ENCODE measurements at regions of chr17 and their contacts with region 1.

Region 1: GRCh38 chr17:29687596-29687995 is 64.9 kb upstream of the CORO6 start:
- DNase-seq: no peak
- H3K4me3 ChIP-seq: no peak overlapping the region
- H3K27ac ChIP-seq: no peak overlapping the region
- H3K4me1 ChIP-seq: peaks cover 9% of the 10 kb centered on the region
- H3K27me3 ChIP-seq: no peaks in the 10 kb centered on the region
- CTCF ChIP-seq: no peak

Region 2: DNA sequence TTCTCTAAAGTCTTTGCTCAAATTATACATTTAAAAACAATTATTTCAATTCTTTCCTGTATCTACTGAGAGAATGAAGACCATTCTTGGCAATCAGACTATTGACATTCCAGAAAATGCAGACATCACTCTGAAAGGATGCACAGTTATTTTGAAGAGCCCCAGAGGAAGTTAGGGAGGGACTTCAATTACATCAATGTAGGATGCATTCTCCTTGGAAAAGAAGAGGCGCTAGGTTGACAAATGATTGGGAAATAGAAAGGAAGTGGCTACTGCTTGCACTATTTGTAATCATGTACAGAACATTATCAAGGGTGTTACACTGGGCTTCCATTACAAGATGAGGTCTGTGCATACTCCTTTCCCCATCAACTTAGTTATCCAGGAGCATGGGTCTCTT is 168.1 kb after region 1 on chr17:
- CTCF ChIA-PET with region 1: no interaction called
- POLR2A ChIA-PET with region 1: no interaction called
- intact Hi-C with region 1: no loop called
- DNase-seq: no peak
- H3K4me3 ChIP-seq: no peak overlapping the region
- H3K27ac ChIP-seq: no peak overlapping the region
- H3K4me1 ChIP-seq: no peaks in the 10 kb centered on the region
- H3K27me3 ChIP-seq: no peaks in the 10 kb centered on the region
- CTCF ChIP-seq: no peak

Region 3: DNA sequence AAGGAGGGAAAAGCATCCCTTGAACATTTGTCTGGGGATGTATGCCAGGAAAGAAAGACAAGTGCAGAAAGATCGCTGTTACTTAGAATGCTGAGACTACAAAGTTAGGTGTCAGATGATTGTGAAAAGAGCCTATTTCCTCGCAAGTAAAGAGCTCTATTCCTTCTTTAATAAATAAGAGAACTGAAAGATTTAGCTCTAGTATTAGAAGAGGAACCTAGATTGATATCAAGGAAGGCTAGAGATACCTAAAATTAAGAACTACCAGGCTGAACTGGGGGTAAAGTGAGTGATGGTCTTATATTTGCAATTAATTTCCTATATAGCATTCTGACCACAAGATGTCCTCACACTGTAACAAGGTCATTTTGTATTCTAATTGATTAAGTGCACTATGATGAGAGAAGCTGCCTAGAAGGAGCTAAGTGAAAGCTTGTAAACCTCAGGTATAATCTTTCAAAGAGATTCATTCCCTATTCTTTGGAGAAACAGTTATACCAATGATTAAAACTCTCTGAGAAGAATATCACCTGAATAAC is 180.1 kb after region 1 on chr17:
- CTCF ChIA-PET with region 1: no interaction called
- POLR2A ChIA-PET with region 1: interaction called, 10 read pairs
- intact Hi-C with region 1: no loop called
- DNase-seq: no peak
- H3K4me3 ChIP-seq: no peak overlapping the region
- H3K27ac ChIP-seq: no peak overlapping the region
- H3K4me1 ChIP-seq: no peaks in the 10 kb centered on the region
- H3K27me3 ChIP-seq: no peaks in the 10 kb centered on the region
- CTCF ChIP-seq: peak; percentile 46